ENCODE measurements at regions of chr5 and their contacts with region 1.

Region 1: DNA sequence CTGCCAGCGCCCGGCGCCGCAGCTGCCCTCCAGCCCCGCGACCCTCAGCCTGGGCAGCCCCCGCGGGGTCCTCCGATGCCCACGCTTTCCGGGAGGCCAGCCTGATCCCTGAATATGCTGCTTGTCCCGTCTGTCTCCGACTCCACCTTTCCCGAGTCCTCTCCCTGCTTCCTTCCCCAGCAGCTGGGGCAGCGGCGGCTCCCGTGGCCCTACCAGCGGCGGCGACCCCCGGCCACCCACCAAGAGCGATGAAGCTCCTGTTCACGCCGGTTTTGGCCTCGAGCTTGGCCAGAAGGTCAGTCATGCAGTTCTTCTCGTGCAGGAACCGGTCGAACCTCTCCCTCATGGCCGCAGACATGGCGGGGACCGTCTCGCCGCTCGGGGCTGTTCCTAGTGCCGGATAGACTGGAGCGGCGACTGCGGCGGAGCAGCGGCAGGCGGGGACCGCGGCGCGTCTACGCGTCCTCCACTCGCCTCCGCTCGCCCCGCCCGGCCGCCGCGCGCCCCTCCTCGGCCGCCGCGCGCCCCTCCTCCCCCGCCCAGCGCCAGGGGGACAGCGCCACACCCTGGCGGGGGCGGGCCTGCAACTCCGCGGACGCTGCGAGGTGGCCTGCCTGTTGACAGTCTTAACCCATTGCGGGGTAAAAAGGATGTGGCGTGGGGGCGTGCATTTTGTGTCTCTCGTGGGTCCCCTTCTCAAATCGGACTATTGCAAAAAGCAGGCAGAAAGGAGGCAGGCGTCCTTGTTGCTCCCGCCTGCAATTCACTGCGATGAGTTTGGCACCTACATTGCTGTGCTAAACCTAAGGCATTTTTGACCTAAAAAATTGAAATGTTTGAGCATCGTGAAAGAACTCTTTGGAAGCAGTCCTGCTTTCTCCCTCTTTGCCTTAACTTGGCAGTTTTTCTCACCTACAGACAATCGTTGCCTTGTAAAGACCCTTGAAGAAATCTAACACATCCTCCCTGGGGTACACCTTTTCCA is at the start of gene REEP5:
- DNase-seq: peak; percentile 64 to 95 (median 82)
- ATAC-seq: peak; percentile 69
- H3K4me3 ChIP-seq: peak within 1 kb of the TSS; percentile 94
- H3K4me3 Mint-ChIP-seq: peak within 1 kb of the TSS; percentile 90
- H3K27ac ChIP-seq: peak within 1 kb of the TSS; percentile 80 to 87
- H3K27ac Mint-ChIP-seq: peak within 1 kb of the TSS; percentile 87
- H3K4me1 ChIP-seq: peaks cover 57% of the 10 kb centered on the region
- H3K4me1 Mint-ChIP-seq: peaks cover 63% of the 10 kb centered on the region
- H3K27me3 ChIP-seq: no peaks in the 10 kb centered on the region
- H3K27me3 Mint-ChIP-seq: no peaks in the 10 kb centered on the region
- CTCF ChIP-seq: peak; percentile 35
- total RNA-seq, gene REEP5: 25.3 to 26.6 TPM

Region 2: DNA sequence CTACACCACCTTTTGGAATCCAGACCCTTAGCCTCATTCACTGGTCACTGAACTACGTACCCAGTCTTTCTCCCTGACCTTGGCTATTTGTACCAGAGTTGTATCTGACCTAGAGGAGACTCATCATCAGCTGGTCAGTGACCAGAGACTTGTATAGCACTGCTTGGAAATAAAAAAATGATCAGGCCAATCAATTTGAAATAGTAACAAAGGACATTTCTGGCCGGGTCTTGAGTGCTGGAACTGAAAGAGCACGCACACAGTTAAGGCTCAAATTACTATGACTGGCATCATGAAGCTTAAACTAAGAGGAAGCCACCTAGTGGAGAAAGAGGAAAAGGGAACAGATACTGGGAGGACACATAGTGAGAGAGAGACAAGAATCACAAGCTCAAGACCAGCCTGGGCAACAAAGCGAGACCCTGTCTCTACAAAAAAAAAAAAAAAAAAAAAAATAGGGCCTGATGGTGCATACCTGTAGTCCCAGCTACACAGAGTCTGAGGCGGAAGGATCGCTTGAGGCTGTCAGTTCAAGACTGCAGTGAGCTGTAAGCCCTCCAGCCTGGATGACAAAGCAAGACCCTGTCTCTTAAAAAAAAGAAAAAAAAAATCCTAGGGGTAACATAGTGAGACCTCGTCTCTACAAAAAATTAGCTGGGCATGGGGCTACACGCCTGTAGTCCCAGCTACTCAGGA is 73.9 kb before region 1 on chr5:
- CTCF ChIA-PET with region 1: interaction called, 13 read pairs
- POLR2A ChIA-PET with region 1: no interaction called
- intact Hi-C with region 1: no loop called
- DNase-seq: peak in 4 of 14 experiments; percentile 17 to 71 (median 62)
- ATAC-seq: peak; percentile 99
- H3K4me3 ChIP-seq: no peak overlapping the region
- H3K4me3 Mint-ChIP-seq: no peak overlapping the region
- H3K27ac ChIP-seq: no peak overlapping the region
- H3K27ac Mint-ChIP-seq: no peak overlapping the region
- H3K4me1 ChIP-seq: peaks cover 4% of the 10 kb centered on the region
- H3K4me1 Mint-ChIP-seq: peaks cover 4% of the 10 kb centered on the region
- H3K27me3 ChIP-seq: no peaks in the 10 kb centered on the region
- H3K27me3 Mint-ChIP-seq: peaks cover 11% of the 10 kb centered on the region
- CTCF ChIP-seq: peak; percentile 83

Region 3: GRCh38 chr5:112878760-112879159 is 43.4 kb before region 1 on chr5:
- CTCF ChIA-PET with region 1: no interaction called
- POLR2A ChIA-PET with region 1: interaction called, 4 read pairs
- intact Hi-C with region 1: loop called (anchors 5 kb)
- DNase-seq: peak in 12 of 14 experiments; percentile 10 to 74 (median 45)
- ATAC-seq: peak; percentile 94
- H3K4me3 ChIP-seq: no peak overlapping the region
- H3K4me3 Mint-ChIP-seq: peak overlapping the region; percentile 0
- H3K27ac ChIP-seq: peak overlapping the region in 1 of 2 donors; percentile 39
- H3K27ac Mint-ChIP-seq: peak overlapping the region; percentile 77
- H3K4me1 ChIP-seq: peaks cover 25% of the 10 kb centered on the region
- H3K4me1 Mint-ChIP-seq: peaks cover 29% of the 10 kb centered on the region
- H3K27me3 ChIP-seq: no peaks in the 10 kb centered on the region
- H3K27me3 Mint-ChIP-seq: no peaks in the 10 kb centered on the region
- CTCF ChIP-seq: no peak

Region 4: DNA sequence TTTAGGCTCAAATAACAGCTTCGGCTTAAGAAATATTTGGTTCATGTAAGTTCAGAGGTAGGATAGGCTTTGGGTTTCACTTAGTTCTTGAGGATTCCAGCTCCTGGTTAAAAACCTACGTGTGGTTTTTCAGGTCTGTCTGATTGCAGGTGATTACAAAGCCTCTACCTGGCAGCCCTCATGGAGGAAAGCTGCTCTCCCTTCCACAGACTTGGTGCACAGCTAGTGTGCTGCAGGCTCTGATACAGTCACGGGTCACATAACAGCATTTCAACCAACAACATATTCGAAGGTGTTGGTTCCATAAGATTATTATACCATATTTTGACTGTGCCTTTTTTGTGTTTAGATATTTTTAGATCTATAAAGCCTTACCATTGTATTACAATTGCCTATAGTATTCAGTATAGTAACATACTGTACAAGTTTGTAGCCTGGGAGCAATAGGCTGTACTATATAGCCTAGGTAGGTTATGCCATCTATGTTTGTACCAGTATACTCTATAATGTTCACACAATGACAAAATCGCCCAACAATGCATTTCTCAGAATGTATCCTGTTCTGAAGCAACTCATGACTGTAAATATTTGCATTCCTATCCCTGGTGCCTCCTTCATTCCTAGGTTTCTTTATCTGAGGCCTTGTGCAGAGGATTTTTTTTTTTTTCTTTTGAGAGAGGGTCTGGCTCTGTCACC is 46.4 kb after region 1 on chr5:
- CTCF ChIA-PET with region 1: no interaction called
- POLR2A ChIA-PET with region 1: interaction called, 6 read pairs
- intact Hi-C with region 1: loop called (anchors 1 to 2 kb)
- DNase-seq: no peak
- ATAC-seq: no peak
- H3K4me3 ChIP-seq: no peak overlapping the region
- H3K4me3 Mint-ChIP-seq: no peak overlapping the region
- H3K27ac ChIP-seq: no peak overlapping the region
- H3K27ac Mint-ChIP-seq: peak overlapping the region; percentile 1
- H3K4me1 ChIP-seq: no peaks in the 10 kb centered on the region
- H3K4me1 Mint-ChIP-seq: peaks cover 7% of the 10 kb centered on the region
- H3K27me3 ChIP-seq: no peaks in the 10 kb centered on the region
- H3K27me3 Mint-ChIP-seq: no peaks in the 10 kb centered on the region
- CTCF ChIP-seq: no peak

Region 5: GRCh38 chr5:113519412-113519811 is 597.3 kb after region 1 on chr5:
- CTCF ChIA-PET with region 1: no interaction called
- POLR2A ChIA-PET with region 1: no interaction called
- intact Hi-C with region 1: loop called in 1 of 2 experiments (anchors 5 kb)
- DNase-seq: no peak
- ATAC-seq: no peak
- H3K4me3 ChIP-seq: no peak overlapping the region
- H3K4me3 Mint-ChIP-seq: no peak overlapping the region
- H3K27ac ChIP-seq: no peak overlapping the region
- H3K27ac Mint-ChIP-seq: no peak overlapping the region
- H3K4me1 ChIP-seq: peaks cover 4% of the 10 kb centered on the region
- H3K4me1 Mint-ChIP-seq: peaks cover 73% of the 10 kb centered on the region
- H3K27me3 ChIP-seq: no peaks in the 10 kb centered on the region
- H3K27me3 Mint-ChIP-seq: no peaks in the 10 kb centered on the region
- CTCF ChIP-seq: no peak

Measured in CD4-positive, alpha-beta T cell (primary cell).